Activated T-helper 2 cell treated with anti-CD3 and anti-CD28 coated beads, Interferon-gamma antibody, Interleukin-2, Interleukin-4, amounts not matched to agents 10 μg/mL and 5 μg/mL and 100 μg/mL, durations not matched to agents 14 hours and 24 hours and 36 hours (primary cell): ENCODE measurements at regions of chr16 and their contacts with region 1.

Region 1: GRCh38 chr16:28211712-28212534 is at the start of gene XPO6:
- DNase-seq: peak; percentile 97
- H3K4me3 Mint-ChIP-seq: peak within 1 kb of the TSS; percentile 87
- H3K27ac Mint-ChIP-seq: peak within 1 kb of the TSS; percentile 99
- H3K4me1 Mint-ChIP-seq: peaks cover 20% of the 10 kb centered on the region
- H3K27me3 Mint-ChIP-seq: no peaks in the 10 kb centered on the region
- total RNA-seq, gene XPO6: 227 and 230 TPM in 2 replicates

Region 2: DNA sequence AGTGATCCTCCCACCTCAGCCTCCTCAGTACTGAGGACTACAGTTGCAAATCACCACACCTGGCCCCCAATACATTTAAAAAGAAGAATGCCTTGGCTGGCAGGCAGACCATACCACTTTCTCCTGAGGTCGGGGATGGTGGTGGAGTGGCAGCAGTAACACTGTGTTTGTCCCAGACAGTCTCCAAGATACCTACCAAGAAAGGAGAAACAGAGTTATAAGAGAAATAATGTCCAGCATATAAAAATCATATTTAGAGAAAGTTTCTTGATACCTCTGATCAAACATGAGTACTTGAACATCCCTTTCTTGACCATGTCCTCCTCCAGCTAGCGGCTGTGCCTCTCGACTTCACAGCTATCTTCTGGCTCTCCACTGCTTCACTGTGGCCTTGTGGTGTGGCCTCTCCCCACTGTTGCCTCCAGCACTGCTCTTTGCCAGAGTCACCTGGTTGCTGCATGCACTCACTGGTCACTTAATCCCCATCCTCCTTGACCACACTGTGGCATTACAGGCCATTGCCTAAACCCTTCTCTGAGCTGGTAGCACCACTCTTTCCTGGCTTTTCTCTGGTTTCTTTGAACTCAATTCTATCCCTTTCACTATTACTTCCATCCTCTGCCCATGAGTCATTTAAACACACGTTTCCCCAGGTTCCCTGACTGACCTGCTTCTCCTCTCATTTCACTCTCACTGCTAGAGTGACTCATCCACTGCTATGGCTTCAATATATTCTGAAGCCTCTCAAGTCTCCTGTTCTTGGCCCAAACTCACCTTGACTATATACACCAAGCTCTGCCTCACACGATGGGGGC is 45.3 kb before region 1 on chr16:
- intact Hi-C with region 1: loop called (anchors 5 kb)
- DNase-seq: no peak
- H3K4me3 Mint-ChIP-seq: no peak overlapping the region
- H3K27ac Mint-ChIP-seq: peak overlapping the region; percentile 29
- H3K4me1 Mint-ChIP-seq: peaks cover 66% of the 10 kb centered on the region
- H3K27me3 Mint-ChIP-seq: no peaks in the 10 kb centered on the region

Region 3: DNA sequence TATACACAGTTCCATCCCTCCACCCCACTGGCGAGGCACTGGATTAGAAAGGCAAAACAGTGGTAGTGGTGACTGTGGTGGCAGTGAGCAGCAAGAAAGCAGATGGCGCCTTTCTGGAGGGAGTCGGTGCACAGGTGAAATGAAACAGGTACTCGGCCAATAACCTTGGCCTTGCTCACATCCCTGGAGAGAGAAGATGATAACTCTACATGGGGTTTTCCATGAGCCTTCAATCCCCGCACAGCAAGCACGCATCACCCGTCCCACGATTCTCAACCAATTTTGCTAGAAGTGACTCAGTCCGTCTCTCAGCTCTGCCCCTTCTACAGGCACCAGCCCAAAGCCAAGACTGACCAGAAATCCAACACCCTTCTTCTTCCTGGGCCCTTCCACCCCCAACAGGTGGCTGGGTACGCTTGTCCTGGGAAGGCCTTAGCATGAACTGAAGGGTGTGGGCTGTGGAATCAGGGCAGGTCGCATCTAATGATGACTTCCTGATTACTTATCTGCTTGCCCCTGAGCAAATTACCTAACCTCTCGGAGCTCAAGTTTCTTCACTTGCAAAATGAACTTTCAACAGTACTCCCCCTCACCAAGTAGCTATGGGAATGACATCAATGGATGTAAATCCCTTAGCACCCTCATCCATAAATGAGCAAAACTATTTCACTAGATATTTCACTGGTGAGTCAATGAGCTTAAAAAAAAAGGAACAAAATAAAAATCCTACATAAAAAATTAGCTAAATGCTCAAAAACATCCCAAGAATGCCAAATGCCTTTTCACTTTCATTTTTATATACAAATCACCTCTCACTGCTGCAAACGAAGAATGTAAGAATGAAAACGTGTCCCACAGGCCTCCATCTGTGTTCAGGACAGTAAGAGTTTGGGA is 18.1 kb before region 1 on chr16:
- intact Hi-C with region 1: loop called (anchors 1 kb)
- DNase-seq: peak; percentile 26
- H3K4me3 Mint-ChIP-seq: peak overlapping the region; percentile 76
- H3K27ac Mint-ChIP-seq: peak overlapping the region; percentile 94
- H3K4me1 Mint-ChIP-seq: peaks cover 75% of the 10 kb centered on the region
- H3K27me3 Mint-ChIP-seq: no peaks in the 10 kb centered on the region

Region 4: GRCh38 chr16:28291873-28292660 is 80.1 kb after region 1 on chr16 and contains the start of gene SBK1:
- intact Hi-C with region 1: loop called (anchors 10 kb)
- DNase-seq: peak; percentile 81
- H3K4me3 Mint-ChIP-seq: peak within 1 kb of the TSS; percentile 76
- H3K27ac Mint-ChIP-seq: peak within 1 kb of the TSS; percentile 62
- H3K4me1 Mint-ChIP-seq: peaks cover 31% of the 10 kb centered on the region
- H3K27me3 Mint-ChIP-seq: peaks cover 22% of the 10 kb centered on the region
- total RNA-seq, gene SBK1: 1.3 and 1.4 TPM in 2 replicates